ENCODE measurements at regions of chr13 and their contacts with region 1.

Region 1: DNA sequence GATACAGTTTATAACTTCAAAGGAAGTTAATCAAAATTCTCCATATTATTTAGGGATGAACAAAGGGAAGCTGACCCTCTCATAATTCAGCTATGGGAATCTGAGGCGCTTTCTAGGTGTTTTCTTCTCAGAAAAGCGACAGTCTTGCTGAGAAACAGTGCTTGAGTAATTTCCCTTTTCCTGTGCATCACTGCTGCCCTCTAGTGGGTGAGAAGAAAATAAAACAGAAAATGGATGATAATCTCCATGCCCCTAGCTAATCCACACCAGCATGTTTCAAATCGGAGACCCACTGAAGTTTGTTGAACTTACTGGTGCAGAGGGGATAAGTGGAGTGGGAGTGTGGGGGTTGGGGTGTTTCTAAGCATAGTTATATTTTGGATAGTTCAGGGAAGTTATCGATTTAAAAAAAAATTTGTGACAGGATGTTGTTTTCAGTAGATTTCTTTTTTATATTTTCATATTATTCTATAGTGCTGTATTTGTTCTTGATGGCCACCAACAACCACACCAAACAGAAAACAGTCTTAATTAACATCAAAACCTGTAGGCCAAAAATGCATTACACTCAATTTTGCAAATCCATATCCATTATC is 21.4 kb downstream of the LCP1 start:
- H3K4me3 Mint-ChIP-seq: no peak overlapping the region
- H3K27ac Mint-ChIP-seq: peak overlapping the region; percentile 60
- H3K4me1 Mint-ChIP-seq: peaks cover 52% of the 10 kb centered on the region
- H3K27me3 Mint-ChIP-seq: no peaks in the 10 kb centered on the region

Region 2: DNA sequence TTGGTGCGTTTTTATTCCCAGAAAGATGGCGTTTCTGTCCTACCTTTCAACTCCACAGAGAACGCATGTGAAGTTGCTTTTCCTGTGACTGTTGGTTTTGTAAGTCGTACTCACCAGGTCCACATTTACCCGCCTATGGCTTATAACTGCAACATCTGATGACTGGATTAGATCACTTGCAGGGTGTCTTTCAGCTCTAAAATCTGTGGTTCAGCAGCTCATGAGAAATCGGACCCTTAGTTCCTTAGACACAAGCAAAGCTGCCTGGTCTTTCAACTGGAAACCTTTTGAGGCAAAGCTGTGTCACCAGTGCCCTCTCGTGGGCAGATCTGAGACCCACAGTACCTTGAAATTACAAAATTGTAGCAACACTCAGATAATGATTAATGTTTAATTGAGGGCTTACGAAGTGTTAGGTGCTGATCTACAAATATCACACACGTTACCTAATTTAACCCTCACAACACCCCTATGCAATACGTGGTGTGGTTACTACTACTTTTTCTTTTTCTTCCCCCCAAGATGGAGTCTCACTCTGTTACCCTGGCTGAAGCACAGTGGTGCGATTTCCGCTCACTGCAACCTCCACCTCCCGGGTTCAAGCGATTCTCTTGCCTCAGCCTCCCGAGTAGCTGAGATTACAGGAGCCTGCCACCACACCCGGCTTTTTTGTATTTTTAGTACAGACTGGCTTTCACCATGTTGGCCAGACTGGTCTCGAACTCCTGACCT is 161.1 kb after region 1 on chr13:
- intact Hi-C with region 1: loop called (anchors 2 kb)
- H3K4me3 Mint-ChIP-seq: no peak overlapping the region
- H3K27ac Mint-ChIP-seq: peak overlapping the region; percentile 85
- H3K4me1 Mint-ChIP-seq: peaks cover 61% of the 10 kb centered on the region
- H3K27me3 Mint-ChIP-seq: no peaks in the 10 kb centered on the region